ENCODE measurements at regions of chr5 and their contacts with region 1.

Region 1: DNA sequence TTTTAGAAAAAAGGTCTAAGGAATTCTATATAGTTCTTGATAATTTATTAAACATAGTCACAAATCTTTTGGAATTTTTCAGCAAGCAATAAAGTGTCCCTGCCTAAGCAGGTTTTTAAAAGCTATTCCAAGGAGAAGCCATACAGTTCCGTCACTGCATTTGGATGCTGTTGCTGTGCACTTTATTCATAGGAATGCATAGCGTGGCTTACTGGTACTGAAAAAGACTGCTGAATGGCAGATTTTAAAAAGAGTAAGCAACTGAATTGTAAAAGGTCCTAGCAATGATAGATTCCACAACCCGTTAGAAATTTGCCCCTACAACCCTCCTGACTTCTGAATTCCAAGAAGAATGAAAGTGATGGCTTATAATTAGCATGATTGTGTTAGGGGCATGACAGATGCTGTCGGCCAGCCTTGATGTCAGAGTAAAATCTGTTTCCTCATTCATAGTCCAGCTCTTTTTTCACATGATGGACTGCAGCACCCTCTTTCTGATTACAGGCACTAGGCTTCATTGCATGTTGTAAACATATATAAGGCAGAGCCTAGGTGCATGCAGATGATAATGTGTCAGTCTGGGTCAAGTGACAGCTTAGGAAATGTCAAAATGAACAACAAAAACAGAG is 227.0 kb downstream of the PDE4D start:
- DNase-seq: no peak
- ATAC-seq: peak; percentile 44 to 80 (median 73)
- H3K4me3 ChIP-seq: no peak overlapping the region
- H3K27ac ChIP-seq: peak overlapping the region; percentile 5
- H3K4me1 ChIP-seq: peaks cover 30% of the 10 kb centered on the region
- H3K27me3 ChIP-seq: no peaks in the 10 kb centered on the region
- CTCF ChIP-seq: peak; percentile 32

Region 2: DNA sequence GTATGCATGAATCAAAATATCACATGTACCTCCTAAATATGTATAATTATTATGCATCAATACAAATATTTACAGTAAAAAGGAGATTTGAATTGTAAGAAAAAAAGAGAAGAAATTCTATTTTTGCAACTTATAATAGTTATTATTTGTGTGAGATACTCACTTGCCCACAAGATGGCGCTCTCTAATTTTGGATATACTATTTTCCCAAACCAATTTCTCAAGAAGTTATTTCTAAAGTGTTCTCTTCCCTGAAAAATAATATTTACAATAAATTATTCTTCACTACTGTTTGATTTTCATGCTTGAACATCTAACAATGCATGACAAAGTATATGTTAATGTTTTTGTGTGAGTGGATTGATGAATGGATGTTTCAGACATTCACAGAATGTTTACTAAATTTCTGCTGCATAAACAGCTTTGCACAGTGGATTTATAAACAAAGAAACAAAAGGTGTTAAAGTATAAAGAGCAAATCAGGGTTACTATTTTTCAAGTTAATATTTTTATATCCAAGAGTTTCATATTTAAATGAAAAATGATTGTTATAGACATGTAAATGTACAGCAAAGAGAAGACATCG is 276.4 kb before region 1 on chr5:
- intact Hi-C with region 1: loop called (anchors 2 to 10 kb)
- DNase-seq: no peak
- ATAC-seq: no peak
- H3K4me3 ChIP-seq: no peak overlapping the region
- H3K27ac ChIP-seq: peak overlapping the region; percentile 38
- H3K4me1 ChIP-seq: peaks cover 6% of the 10 kb centered on the region
- H3K27me3 ChIP-seq: no peaks in the 10 kb centered on the region
- CTCF ChIP-seq: peak; percentile 76

Measured in psoas muscle (tissue), 8 donors.